Right ventricle myocardium inferior (tissue), 1 donor: ENCODE measurements at regions of chr22 and their contacts with region 1.

Region 1: DNA sequence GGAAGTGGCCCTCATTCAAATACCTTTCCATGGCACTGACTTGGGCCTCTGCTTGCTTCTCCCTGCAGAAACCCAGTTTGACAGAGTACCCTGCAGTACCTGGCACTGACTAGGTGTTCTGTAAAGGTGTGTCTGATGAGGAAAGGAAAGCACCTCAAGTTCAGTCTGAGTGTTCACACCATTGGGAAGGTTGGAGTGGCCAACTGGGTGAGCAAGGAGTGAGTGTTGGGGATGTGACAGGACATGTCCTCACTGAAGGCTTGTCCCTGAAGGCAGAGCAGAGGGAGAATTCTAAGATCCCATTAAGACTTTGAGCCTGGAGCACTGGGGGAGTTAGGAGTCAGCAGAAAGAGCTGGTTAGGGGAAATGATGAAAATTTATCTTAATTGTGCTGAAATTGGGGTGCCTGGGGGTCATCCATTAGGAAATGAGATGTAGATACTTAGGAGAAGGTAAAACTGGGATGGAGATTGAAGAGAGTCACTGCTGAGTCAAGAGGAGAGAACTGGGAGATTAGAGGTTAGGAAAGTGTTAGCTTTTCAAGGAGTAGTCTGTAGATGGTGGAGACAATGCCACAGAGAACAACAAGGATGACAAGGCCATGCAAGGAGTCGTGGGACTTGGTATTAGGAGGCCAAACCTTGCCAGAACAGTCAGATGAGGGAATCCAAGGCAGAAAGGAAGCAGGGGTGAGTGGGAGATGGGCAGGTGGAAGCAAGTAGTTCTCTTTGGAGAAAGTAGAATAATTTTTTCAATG is 6.1 kb downstream of the SREBF2 start:
- DNase-seq: no peak
- ATAC-seq: no peak

Region 2: DNA sequence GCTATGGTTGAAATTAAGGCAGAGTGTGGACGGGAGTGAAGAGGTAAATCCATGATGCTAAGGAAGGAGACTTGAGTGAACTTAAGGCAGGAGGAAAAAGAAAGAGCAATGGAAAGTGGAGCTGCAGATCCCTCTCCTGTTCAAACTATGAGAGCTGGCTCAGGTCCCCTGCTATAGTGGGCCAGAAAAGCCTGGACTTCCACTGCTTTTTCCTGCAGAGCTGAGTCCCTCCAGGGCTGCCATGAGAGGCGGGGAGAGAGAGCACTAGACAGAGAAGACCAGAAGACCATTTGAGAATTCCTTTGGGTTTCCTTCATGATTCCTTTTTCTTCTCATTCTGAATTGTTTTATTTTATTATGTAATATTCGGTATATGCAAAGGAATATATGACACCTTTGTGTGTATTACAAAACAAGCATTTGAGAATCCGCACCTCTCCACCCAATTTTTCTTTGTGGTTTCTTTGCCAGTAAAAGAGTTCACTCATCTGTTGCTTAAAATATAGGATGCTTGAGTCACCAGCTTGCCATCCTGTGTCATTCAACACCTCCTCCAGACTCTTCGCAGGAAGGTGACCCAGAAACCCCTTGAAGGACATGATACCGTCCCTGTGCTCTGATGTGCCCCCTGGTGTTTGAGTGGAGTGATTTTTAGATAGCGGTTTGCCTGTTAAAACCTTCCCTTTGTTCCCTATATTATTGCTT is 18.3 kb after region 1 on chr22:
- intact Hi-C with region 1: no loop called
- DNase-seq: no peak
- ATAC-seq: no peak

Region 3: GRCh38 chr22:41919357-41920224 is 80.6 kb after region 1 on chr22:
- intact Hi-C with region 1: loop called (anchors 5 kb)
- DNase-seq: peak; percentile 85
- ATAC-seq: peak; percentile 72